Sigmoid colon (tissue), 7 donors: ENCODE measurements at regions of chr9 and their contacts with region 1.

Region 1: GRCh38 chr9:19252174-19252884 is 21.8 kb downstream of the DENND4C start:
- DNase-seq: no peak
- H3K4me3 ChIP-seq: no peak overlapping the region
- H3K27ac ChIP-seq: no peak overlapping the region
- H3K4me1 ChIP-seq: peaks cover 0 to 24% (median 12%) of the 10 kb centered on the region in 4 donors
- H3K27me3 ChIP-seq: no peaks in the 10 kb centered on the region
- CTCF ChIP-seq: no peak
- EP300 ChIP-seq: no peak
- POLR2A ChIP-seq: no peak

Region 2: GRCh38 chr9:19269581-19269980 is 17.3 kb after region 1 on chr9:
- intact Hi-C with region 1: loop called (anchors 2 kb)
- DNase-seq: no peak
- H3K4me3 ChIP-seq: no peak overlapping the region
- H3K27ac ChIP-seq: no peak overlapping the region
- H3K4me1 ChIP-seq: peaks cover 0 to 20% (median 3%) of the 10 kb centered on the region in 4 donors
- H3K27me3 ChIP-seq: no peaks in the 10 kb centered on the region
- CTCF ChIP-seq: no peak
- EP300 ChIP-seq: no peak
- POLR2A ChIP-seq: no peak